ENCODE measurements at regions of chr17 and their contacts with region 1.

Region 1: GRCh38 chr17:77444984-77445759 is 304.4 kb downstream of the SEC14L1 start:
- DNase-seq: peak; percentile 70
- ATAC-seq: peak; percentile 45
- H3K4me3 Mint-ChIP-seq: peak overlapping the region; percentile 80
- H3K27ac Mint-ChIP-seq: peak overlapping the region; percentile 94
- H3K4me1 Mint-ChIP-seq: peaks cover 96% of the 10 kb centered on the region
- H3K27me3 Mint-ChIP-seq: no peaks in the 10 kb centered on the region
- CTCF ChIP-seq: no peak

Region 2: DNA sequence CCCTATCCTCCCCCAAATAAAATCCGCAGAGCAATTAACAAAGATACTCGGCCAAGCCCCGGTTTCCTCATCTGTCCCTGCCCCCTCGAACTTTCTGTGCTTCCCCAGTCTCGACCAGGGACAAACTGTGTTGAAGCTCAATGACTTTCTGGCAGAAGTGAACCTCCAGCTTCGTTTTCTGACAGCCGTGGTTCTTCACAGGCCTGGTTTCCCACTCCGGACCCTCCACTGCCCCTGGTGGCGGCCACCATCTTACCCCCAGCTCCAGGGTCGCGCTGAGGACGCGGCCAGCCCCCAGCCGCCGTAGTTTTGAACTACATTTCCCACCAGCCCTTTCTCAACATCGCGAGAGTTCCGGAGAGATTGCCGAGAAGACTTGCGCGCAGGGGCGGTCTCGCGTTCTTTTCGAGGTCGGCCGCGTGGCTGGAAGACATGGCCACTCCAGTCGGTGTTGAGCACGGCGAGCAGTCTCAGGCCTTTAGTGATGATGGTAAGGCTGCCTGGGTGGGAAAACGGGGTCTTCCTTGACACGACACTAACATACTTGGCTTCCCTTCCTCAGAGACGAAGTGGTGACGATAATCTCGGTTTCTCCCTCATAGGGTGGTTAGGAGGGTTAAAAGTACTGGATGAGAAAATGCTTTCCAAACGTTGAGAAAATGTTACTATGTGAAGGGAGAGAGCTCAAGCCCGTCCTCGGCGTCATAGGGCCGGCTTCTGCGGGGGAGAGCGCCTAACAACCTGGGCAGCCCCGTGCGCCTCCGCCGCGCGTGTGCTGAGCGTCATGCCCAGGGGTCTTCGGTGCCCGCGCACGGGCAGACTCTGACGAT is 887.6 kb before region 1 on chr17:
- CTCF ChIA-PET with region 1: no interaction called
- POLR2A ChIA-PET with region 1: no interaction called
- intact Hi-C with region 1: loop called (anchors 10 kb)
- DNase-seq: peak; percentile 87
- ATAC-seq: peak; percentile 90
- H3K4me3 Mint-ChIP-seq: peak overlapping the region; percentile 95
- H3K27ac Mint-ChIP-seq: peak overlapping the region; percentile 98
- H3K4me1 Mint-ChIP-seq: peaks cover 68% of the 10 kb centered on the region
- H3K27me3 Mint-ChIP-seq: no peaks in the 10 kb centered on the region
- CTCF ChIP-seq: no peak

Region 3: GRCh38 chr17:77325577-77326075 is 119.5 kb before region 1 on chr17:
- CTCF ChIA-PET with region 1: interaction called, 7 read pairs
- POLR2A ChIA-PET with region 1: interaction called, 87 read pairs
- intact Hi-C with region 1: loop called (anchors 1 kb)
- DNase-seq: no peak
- ATAC-seq: peak; percentile 6
- H3K4me3 Mint-ChIP-seq: peak overlapping the region; percentile 92
- H3K27ac Mint-ChIP-seq: peak overlapping the region; percentile 96
- H3K4me1 Mint-ChIP-seq: peaks cover 88% of the 10 kb centered on the region
- H3K27me3 Mint-ChIP-seq: no peaks in the 10 kb centered on the region
- CTCF ChIP-seq: no peak

Region 4: GRCh38 chr17:77404812-77405581 is 40.2 kb before region 1 on chr17:
- CTCF ChIA-PET with region 1: interaction called, 20 read pairs
- POLR2A ChIA-PET with region 1: interaction called, 191 read pairs
- intact Hi-C with region 1: loop called (anchors 1 kb)
- DNase-seq: peak; percentile 60
- ATAC-seq: peak; percentile 70
- H3K4me3 Mint-ChIP-seq: peak overlapping the region; percentile 89
- H3K27ac Mint-ChIP-seq: peak overlapping the region; percentile 96
- H3K4me1 Mint-ChIP-seq: peaks cover 94% of the 10 kb centered on the region
- H3K27me3 Mint-ChIP-seq: no peaks in the 10 kb centered on the region
- CTCF ChIP-seq: no peak

Region 5: GRCh38 chr17:77465358-77466041 is 20.3 kb after region 1 on chr17:
- CTCF ChIA-PET with region 1: interaction called, 6 read pairs
- POLR2A ChIA-PET with region 1: interaction called, 831 read pairs
- intact Hi-C with region 1: loop called (anchors 1 kb)
- DNase-seq: peak; percentile 62
- ATAC-seq: peak; percentile 81
- H3K4me3 Mint-ChIP-seq: peak overlapping the region; percentile 75
- H3K27ac Mint-ChIP-seq: peak overlapping the region; percentile 93
- H3K4me1 Mint-ChIP-seq: peaks cover 94% of the 10 kb centered on the region
- H3K27me3 Mint-ChIP-seq: no peaks in the 10 kb centered on the region
- CTCF ChIP-seq: no peak

Region 6: GRCh38 chr17:77494664-77495435 is 49.7 kb after region 1 on chr17:
- CTCF ChIA-PET with region 1: interaction called, 14 read pairs
- POLR2A ChIA-PET with region 1: interaction called, 27 read pairs
- intact Hi-C with region 1: loop called (anchors 1 kb)
- DNase-seq: peak; percentile 73
- ATAC-seq: peak; percentile 64
- H3K4me3 Mint-ChIP-seq: peak overlapping the region; percentile 15
- H3K27ac Mint-ChIP-seq: peak overlapping the region; percentile 77
- H3K4me1 Mint-ChIP-seq: peaks cover 27% of the 10 kb centered on the region
- H3K27me3 Mint-ChIP-seq: no peaks in the 10 kb centered on the region
- CTCF ChIP-seq: peak; percentile 77

Region 7: GRCh38 chr17:78128551-78129350 is 683.6 kb after region 1 on chr17 and contains the start of gene TMC6:
- CTCF ChIA-PET with region 1: no interaction called
- POLR2A ChIA-PET with region 1: no interaction called
- intact Hi-C with region 1: loop called (anchors 10 kb)
- DNase-seq: peak; percentile 66
- ATAC-seq: peak; percentile 17
- H3K4me3 Mint-ChIP-seq: peak within 1 kb of the TSS; percentile 92
- H3K27ac Mint-ChIP-seq: peak within 1 kb of the TSS; percentile 93
- H3K4me1 Mint-ChIP-seq: peaks cover 74% of the 10 kb centered on the region
- H3K27me3 Mint-ChIP-seq: no peaks in the 10 kb centered on the region
- CTCF ChIP-seq: no peak
- total RNA-seq, gene TMC6: 746 and 896 TPM in 2 replicates

Measured in activated B cell treated with CpG ODN at 0.5 μM for 24 hours (primary cell).